RWPE1 (cell line): ENCODE measurements at regions of chr18 and their contacts with region 1.

Region 1: GRCh38 chr18:45722899-45723298 is 1.1 kb upstream of the SLC14A1 start:
- DNase-seq: peak; percentile 64
- H3K27ac ChIP-seq: no peak overlapping the region
- CTCF ChIP-seq: peak; percentile 74

Region 2: GRCh38 chr18:45879681-45880655 is 157.1 kb after region 1 on chr18:
- CTCF ChIA-PET with region 1: interaction called, 10 read pairs
- POLR2A ChIA-PET with region 1: no interaction called
- DNase-seq: peak; percentile 19
- H3K27ac ChIP-seq: no peak overlapping the region
- CTCF ChIP-seq: peak; percentile 97